Activated T-helper 1 cell treated with anti-CD3 and anti-CD28 coated beads, Interleukin-12 subunit alpha, Interleukin-12 subunit beta, Interleukin-2, Interleukin-4 antibody, amounts not matched to agents 30 ng/mL and 10 ng/mL and 1 ng/mL, durations not matched to agents 14 hours and 24 hours and 36 hours (primary cell): ENCODE measurements at regions of chr5 and their contacts with region 1.

Region 1: DNA sequence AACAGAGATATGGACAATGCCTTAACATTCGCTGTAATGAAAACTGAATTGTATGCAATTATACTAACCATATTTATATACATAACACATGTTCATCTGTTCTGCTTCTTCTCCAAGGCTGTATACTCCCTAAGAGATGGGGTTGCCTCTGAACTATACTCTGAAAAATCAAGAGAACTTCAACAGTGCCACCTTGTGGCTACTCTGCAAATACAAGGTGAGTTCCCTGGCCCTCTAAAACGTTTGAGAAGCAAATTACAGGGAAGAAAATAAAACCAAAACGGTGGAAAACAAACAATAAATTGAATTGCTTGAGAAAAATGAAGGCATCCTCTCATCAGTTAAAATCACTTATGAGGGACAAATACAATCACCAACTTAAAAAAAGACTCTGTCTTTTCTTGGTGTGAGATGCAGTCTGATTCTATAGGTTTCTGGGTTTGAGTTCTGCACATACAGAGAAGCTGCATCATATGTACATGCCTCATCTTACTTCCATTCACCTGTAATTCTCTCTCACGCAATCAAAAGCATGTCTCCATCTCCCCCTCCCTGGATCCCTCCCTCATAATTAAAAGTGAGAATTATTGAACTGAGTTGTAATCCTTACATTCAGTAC is 98.6 kb downstream of the FBXW11 start:
- DNase-seq: peak; percentile 33
- H3K4me3 Mint-ChIP-seq: no peak overlapping the region
- H3K27ac Mint-ChIP-seq: peak overlapping the region; percentile 89
- H3K4me1 Mint-ChIP-seq: peaks cover 45% of the 10 kb centered on the region
- H3K27me3 Mint-ChIP-seq: no peaks in the 10 kb centered on the region

Region 2: GRCh38 chr5:171418316-171418981 is 489.4 kb before region 1 on chr5:
- intact Hi-C with region 1: loop called (anchors 1 kb)
- DNase-seq: peak; percentile 45
- H3K4me3 Mint-ChIP-seq: peak overlapping the region; percentile 62
- H3K27ac Mint-ChIP-seq: no peak overlapping the region
- H3K4me1 Mint-ChIP-seq: peaks cover 5% of the 10 kb centered on the region
- H3K27me3 Mint-ChIP-seq: peaks cover 24% of the 10 kb centered on the region

Region 3: DNA sequence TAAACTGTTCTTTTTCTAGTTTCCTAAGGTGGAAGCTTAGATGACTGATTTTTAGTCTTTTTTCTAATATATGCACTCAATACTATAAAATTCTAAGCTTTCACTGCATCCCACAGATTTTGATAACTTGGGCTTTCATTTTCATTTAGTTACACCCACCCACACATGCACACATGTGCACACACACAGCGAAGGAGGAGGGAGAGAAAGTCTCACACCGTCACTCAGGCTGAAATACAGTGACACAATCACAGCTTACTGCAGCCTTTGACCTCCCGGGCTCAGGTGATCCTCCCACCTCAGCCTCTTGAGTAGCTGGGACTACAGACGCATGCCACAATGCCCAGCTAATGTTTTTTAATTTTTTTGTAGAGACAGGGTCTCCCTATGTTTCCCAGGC is 25.7 kb before region 1 on chr5:
- intact Hi-C with region 1: loop called (anchors 1 kb)
- DNase-seq: no peak
- H3K4me3 Mint-ChIP-seq: no peak overlapping the region
- H3K27ac Mint-ChIP-seq: no peak overlapping the region
- H3K4me1 Mint-ChIP-seq: peaks cover 14% of the 10 kb centered on the region
- H3K27me3 Mint-ChIP-seq: no peaks in the 10 kb centered on the region

Region 4: DNA sequence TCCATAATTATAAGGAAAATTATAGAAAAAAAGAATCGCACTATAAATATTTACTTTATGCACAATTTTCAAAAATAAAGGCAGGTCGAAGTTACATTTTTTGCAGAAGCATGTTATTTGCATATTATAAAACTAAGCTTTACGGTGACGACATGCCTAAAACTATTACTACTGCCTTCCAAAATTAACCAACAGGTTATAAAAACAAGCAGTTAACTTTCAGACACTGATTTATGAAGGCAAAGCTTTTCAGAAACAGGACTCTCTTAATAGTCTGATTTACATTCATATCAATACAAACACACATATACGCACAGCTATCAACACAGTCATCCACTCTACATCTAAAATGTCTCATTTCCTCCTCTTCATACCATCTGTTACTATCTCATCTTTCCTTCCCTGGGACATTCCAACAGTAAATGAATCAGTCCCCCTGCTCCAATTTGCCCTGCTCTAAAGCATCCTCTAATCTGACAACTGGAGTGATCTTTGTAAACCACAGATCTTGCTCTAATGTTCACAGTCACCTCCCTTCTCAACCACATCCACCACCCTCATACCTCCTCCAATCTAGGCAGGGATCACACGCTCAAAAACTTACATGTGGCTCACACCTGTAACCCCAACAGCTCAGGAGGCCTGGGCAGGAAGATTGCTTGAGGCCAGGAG is 77.0 kb after region 1 on chr5:
- intact Hi-C with region 1: loop called (anchors 1 kb)
- DNase-seq: peak; percentile 49
- H3K4me3 Mint-ChIP-seq: no peak overlapping the region
- H3K27ac Mint-ChIP-seq: peak overlapping the region; percentile 16
- H3K4me1 Mint-ChIP-seq: peaks cover 42% of the 10 kb centered on the region
- H3K27me3 Mint-ChIP-seq: no peaks in the 10 kb centered on the region

Region 5: DNA sequence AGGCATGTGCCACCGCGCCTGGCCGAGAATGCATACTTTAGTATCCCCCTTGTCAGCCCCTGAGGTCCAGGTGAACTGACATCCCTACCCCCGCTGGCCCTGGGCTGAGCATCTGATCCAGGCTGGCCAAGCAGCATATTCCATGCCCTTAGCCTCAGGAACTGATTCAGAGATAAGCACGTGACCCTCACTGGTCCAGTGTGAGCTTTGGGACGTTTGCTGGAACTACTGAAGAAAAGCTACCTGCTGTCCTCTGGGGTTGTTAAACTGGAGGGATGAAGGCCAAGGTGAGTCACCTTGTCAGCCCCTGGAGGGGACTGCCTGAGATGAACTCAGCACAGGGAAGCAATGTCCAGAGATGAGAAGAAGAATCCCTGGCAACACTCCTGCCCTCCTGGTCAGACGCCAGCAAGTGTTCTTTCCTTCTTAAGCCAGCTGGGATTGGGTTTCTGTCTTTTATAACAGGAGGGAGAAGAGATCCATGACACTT is 157.7 kb after region 1 on chr5:
- intact Hi-C with region 1: loop called (anchors 1 kb)
- DNase-seq: no peak
- H3K4me3 Mint-ChIP-seq: no peak overlapping the region
- H3K27ac Mint-ChIP-seq: no peak overlapping the region
- H3K4me1 Mint-ChIP-seq: peaks cover 47% of the 10 kb centered on the region
- H3K27me3 Mint-ChIP-seq: no peaks in the 10 kb centered on the region

Region 6: GRCh38 chr5:172097356-172097755 is 189.5 kb after region 1 on chr5:
- intact Hi-C with region 1: no loop called
- DNase-seq: no peak
- H3K4me3 Mint-ChIP-seq: no peak overlapping the region
- H3K27ac Mint-ChIP-seq: no peak overlapping the region
- H3K4me1 Mint-ChIP-seq: no peaks in the 10 kb centered on the region
- H3K27me3 Mint-ChIP-seq: no peaks in the 10 kb centered on the region

Region 7: GRCh38 chr5:172223901-172224873 is 316.4 kb after region 1 on chr5:
- intact Hi-C with region 1: loop called (anchors 1 kb)
- DNase-seq: no peak
- H3K4me3 Mint-ChIP-seq: no peak overlapping the region
- H3K27ac Mint-ChIP-seq: peak overlapping the region; percentile 87
- H3K4me1 Mint-ChIP-seq: peaks cover 28% of the 10 kb centered on the region
- H3K27me3 Mint-ChIP-seq: peaks cover 5% of the 10 kb centered on the region

Region 8: DNA sequence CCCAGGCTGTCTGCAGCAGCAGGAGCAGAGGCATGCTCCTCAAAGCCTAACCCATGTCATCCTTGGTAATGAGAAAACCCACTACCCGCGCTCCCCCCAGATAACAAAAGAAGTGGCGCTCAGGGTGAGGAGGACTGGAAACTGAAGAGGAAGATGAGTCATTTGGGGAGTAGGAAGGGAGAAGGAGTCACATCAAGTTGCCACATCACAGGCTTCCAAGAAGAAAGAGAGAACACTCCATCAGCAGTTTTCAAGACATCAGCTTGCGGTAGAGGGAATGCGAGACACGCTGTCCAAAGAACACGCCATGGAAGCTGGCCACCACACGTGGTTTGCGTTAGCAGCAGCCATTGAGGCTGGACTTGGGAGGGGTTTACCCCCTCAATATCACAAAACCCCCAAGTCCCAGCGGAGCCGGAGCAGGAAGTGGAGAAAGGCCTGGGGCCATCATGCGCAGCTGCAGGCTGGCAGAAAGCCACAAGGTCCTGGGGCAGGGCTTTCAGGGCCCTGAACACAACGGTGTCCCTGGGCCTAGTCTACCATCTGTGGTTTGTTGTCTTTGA is 505.0 kb after region 1 on chr5:
- intact Hi-C with region 1: loop called (anchors 5 kb)
- DNase-seq: no peak
- H3K4me3 Mint-ChIP-seq: no peak overlapping the region
- H3K27ac Mint-ChIP-seq: peak overlapping the region; percentile 15
- H3K4me1 Mint-ChIP-seq: peaks cover 31% of the 10 kb centered on the region
- H3K27me3 Mint-ChIP-seq: peaks cover 6% of the 10 kb centered on the region